ENCODE measurements at regions of chr20 and their contacts with region 1.

Region 1: DNA sequence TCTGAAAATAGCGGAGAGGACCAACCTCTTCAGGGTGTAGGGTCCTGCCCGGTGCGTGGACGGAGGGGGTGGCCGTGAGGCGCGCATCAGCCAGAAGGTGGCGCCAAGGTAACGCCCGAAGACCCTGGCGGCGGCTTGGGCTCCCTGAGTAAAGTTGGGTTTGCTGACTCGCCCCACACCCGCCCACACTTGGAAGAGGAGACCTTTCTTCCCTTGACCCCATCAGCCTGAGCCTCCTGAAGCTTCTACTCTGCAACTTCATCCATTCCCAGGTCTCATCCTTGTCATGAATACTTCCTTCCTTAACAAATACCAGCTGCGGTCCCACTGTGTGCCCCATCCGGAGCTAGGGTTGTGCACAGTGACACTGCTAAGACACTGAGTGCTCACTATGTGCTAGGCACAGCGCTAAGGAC is 14.6 kb downstream of the CD40 start:
- DNase-seq: peak; percentile 40
- H3K4me3 Mint-ChIP-seq: no peak overlapping the region
- H3K27ac Mint-ChIP-seq: no peak overlapping the region
- H3K4me1 Mint-ChIP-seq: peaks cover 2% of the 10 kb centered on the region
- H3K27me3 Mint-ChIP-seq: peaks cover 12% of the 10 kb centered on the region

Region 2: DNA sequence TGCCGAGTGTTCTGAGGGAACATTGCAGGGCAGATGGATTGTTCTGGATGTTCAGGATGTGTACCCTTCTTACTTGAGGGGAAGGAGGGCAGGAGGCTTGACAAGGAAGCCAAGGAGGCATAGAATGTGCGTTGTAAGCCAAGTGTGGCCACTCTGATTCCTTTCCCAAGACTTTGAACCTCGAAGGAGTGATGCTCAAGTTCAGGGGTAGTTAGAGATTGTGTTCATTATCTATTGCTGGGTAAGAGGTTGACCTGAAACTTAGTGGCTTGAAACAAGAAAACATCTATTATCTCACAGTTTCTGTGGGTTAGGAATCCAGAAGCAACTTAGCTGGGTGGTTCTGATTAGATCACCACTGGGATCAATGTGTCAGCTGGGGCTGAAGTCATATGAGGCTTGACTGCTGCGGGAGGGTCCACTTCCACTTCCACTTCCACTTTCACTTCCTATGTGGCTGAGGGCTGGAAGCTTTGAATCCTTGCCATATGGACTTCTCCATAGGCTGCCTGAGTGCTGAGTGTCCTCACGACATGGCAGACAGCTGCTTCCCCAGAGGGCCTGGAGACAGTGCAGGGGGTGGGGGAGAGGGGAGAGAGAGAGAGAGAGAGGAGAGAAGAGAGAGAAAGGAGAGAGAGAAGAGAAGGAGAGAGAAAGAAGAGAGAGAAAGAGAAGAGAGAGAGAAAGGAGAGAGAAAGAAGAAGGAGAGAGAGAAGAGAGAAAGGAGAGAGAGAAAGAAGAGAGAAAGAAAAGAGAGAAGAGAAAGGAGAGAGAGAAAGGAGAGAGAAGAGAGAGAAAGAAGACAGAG is 21.5 kb before region 1 on chr20:
- intact Hi-C with region 1: no loop called
- DNase-seq: no peak
- H3K4me3 Mint-ChIP-seq: no peak overlapping the region
- H3K27ac Mint-ChIP-seq: no peak overlapping the region
- H3K4me1 Mint-ChIP-seq: peaks cover 8% of the 10 kb centered on the region
- H3K27me3 Mint-ChIP-seq: peaks cover 66% of the 10 kb centered on the region

Region 3: DNA sequence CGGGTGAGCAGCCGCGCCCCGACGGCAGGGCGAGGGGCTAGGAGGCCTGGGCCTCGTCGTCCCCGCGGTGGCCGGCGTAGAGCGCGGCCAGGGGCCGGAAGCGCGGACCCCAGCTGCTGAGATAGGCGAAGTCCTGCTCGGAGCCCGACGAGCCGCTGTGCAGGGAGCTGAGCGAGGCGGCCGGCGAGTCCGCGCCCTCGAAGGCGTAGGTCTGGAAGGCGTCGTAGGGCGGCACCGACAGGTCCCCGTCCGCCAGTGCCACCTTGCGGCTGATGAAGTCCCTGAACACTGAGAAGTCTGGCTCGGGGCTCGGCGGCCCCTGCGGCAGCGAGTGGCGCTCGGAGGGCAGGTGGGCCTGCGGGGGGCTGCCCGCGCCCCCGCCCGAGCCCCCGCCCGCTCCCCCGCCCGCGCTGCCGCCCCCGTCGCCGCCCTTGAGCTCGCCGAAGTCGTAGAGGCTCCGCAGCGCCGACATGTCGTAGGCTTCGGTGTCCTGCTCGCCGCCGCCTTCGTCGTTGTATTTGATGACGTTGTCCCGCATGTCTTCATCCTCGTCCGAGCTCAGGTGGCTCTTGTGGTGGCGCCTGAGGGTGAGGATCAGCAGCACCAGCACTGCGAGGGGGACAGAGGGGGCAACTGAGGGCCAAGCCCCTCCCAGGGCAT is 41.9 kb after region 1 on chr20:
- intact Hi-C with region 1: loop called (anchors 2 kb)
- DNase-seq: peak; percentile 46
- H3K4me3 Mint-ChIP-seq: no peak overlapping the region
- H3K27ac Mint-ChIP-seq: no peak overlapping the region
- H3K4me1 Mint-ChIP-seq: no peaks in the 10 kb centered on the region
- H3K27me3 Mint-ChIP-seq: peaks cover 39% of the 10 kb centered on the region

Measured in activated T-helper 2 cell treated with anti-CD3 and anti-CD28 coated beads, Interferon-gamma antibody, Interleukin-2, Interleukin-4, amounts not matched to agents 10 μg/mL and 5 μg/mL and 100 μg/mL, durations not matched to agents 14 hours and 24 hours and 36 hours (primary cell).